Thyroid gland (tissue), 4 donors: ENCODE measurements at regions of chr6 and their contacts with region 1.

Region 1: DNA sequence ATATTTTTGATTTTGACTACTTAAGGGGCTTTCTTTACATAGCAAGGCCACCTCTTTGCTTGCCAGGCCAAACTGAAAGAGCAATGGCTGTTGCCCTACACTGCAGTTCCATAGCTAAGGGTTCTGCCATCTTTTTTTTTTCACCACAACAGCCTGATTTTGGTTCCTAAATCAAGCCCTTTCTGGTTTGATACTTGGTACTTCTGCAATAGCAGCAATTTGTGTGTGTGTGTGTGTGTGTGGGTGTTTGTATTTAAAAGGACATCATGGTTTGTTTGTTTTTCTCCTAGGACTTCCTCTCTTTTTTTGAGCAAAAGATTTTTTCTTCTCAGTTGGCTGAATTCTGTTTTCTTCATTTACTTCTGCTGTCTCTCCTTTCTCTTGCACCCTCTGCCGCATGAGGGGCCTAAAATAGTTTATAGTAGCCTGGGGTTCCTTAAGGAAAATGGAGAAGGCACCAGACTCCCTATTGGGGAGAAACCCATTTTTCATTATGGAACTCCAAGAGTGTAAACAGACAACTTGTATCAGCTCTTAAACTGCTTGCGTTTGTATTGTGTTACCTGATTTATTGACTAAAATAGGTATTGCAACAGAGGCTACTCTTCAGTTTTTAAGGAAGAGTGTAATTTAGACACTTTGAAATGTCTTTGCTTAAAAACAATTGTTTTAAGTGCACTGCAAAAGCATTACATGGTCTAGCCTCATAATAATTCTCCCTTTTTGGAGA is 12.2 kb upstream of the GCLC start:
- DNase-seq: no peak
- H3K4me3 ChIP-seq: no peak overlapping the region
- H3K27ac ChIP-seq: no peak overlapping the region
- H3K4me1 ChIP-seq: peaks cover 0 to 7% of the 10 kb centered on the region in 2 donors
- H3K27me3 ChIP-seq: no peaks in the 10 kb centered on the region
- CTCF ChIP-seq: no peak
- POLR2A ChIP-seq: no peak

Region 2: DNA sequence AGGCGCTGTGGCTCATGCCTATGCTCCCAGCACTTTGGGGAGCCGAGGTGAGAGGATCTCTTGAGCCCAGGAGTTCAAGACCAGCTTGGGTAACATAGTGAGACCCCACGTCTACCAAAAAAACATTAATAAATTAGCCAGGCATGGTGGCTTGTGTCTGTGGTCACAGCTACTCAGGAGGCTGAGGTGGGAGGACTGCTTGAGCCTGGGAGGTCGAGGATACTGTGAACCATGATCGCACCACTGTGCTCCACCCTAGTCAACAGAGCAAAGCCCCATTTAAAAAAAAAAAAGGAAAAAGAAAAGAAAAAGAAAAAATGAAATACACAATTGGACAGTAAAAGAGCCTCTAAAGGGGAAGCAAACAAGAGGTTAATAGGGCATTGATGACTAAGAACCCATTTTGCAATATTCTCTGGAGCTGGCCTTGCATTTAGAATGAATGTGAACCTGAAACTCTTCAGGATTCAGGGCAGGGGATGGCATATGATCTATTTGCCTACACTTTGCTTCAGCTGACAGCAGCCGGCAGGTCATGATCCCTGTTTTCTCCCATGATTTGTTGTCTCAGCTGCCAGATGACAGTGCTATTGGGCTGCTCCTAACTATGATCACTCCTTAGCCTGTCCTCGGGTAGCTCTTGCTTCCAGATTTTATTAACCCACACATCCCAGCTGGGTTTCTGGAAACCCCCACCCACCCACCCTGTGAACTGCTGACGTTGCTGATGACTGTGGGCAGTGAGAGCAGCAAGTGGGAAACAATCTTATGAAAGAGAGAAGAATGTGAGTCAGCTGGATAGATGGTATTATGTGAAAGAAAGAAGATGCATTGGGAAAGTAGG is 124.6 kb before region 1 on chr6:
- intact Hi-C with region 1: no loop called
- DNase-seq: no peak
- H3K4me3 ChIP-seq: no peak overlapping the region
- H3K27ac ChIP-seq: no peak overlapping the region
- H3K4me1 ChIP-seq: no peaks in the 10 kb centered on the region
- H3K27me3 ChIP-seq: no peaks in the 10 kb centered on the region
- CTCF ChIP-seq: no peak
- POLR2A ChIP-seq: no peak

Region 3: DNA sequence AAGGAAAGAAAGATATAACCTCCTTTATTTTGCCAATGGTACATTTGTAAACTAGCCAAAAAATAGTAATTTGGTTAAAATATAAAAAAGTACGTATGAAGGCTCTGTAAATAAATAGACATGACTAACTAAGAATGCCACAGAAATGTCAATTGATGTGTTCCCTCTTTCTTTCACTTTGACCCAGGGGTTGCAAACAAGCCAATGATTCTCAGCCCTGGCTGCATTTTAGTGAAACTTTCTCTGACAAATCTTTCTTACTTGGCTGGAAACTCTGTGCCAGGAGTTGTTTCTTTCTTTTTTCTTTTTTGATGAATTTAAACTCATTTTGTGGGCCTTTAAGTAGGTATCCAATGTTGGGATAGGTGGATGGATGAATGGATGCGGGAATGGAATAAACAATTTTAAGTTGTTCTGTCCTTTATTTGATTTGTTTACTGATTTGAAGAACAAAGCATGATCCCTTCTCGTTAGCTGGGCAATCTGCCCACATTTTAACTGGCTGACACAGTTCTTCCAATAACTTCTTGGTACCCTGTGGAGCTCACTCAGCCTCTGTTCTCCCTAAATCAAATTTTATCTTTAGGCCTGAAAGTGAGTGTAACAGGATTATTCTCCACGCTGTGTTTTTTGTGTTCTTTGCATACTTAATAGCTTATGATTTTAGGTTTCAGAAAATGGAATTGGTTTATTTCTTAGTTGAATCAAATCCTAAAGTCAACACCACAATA is 46.4 kb after region 1 on chr6:
- intact Hi-C with region 1: loop called (anchors 10 kb)
- DNase-seq: peak; percentile 49 to 59
- H3K4me3 ChIP-seq: no peak overlapping the region
- H3K27ac ChIP-seq: peak overlapping the region in 2 of 3 donors; percentile 45 to 50
- H3K4me1 ChIP-seq: no peaks in the 10 kb centered on the region
- H3K27me3 ChIP-seq: no peaks in the 10 kb centered on the region
- CTCF ChIP-seq: no peak
- POLR2A ChIP-seq: no peak

Region 4: GRCh38 chr6:53647462-53648094 is 90.4 kb after region 1 on chr6:
- intact Hi-C with region 1: loop called (anchors 10 kb)
- DNase-seq: no peak
- H3K4me3 ChIP-seq: no peak overlapping the region
- H3K27ac ChIP-seq: no peak overlapping the region
- H3K4me1 ChIP-seq: peaks cover 0 to 12% of the 10 kb centered on the region in 2 donors
- H3K27me3 ChIP-seq: no peaks in the 10 kb centered on the region
- CTCF ChIP-seq: no peak
- POLR2A ChIP-seq: no peak